Activated T-helper 2 cell treated with anti-CD3 and anti-CD28 coated beads, Interferon-gamma antibody, Interleukin-2, Interleukin-4, amounts not matched to agents 10 μg/mL and 5 μg/mL and 100 μg/mL, durations not matched to agents 14 hours and 24 hours and 36 hours (primary cell): ENCODE measurements at regions of chr15 and their contacts with region 1.

Region 1: DNA sequence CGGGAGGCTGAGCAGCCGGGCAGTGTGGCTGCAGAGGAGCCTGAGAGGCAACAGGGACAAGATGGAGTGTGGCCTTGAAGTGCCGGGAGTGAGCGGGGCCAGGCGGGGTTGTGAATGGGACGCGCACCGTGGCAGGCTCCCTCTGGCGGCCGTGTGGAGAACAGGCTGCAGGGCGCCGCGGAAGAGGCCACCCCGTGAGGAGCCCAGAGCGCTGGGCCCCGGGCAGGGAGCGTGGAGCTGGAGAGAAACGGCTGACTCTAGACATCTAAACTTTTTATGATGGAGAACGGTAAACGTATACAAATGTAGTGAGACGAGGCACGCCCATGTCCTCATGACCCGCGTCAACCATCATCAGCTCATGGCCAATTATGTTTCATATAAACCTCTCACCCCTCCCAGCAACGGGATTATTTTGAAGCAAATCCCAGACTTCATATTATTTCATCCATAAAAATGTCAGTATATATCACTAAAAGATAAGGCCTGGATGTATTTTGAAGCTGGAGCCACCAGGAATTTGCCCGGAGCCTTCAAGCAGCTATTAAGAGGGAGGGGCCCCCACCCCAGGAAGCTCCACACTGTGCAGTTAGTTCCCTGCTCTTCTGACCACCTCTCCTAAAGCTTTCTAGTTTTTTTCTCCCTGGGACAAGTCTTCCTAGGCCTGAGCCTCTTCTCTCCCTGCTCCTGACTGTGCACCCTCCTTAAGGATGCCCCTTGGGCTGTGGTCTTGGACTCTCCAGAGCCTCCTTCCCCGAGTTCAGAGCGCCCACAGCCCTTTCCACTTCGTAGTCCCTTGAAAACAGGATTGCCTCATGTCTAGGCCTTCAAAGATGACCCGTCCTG is 149.4 kb downstream of the SMAD6 start:
- DNase-seq: peak; percentile 68
- H3K4me3 Mint-ChIP-seq: no peak overlapping the region
- H3K27ac Mint-ChIP-seq: no peak overlapping the region
- H3K4me1 Mint-ChIP-seq: peaks cover 9% of the 10 kb centered on the region
- H3K27me3 Mint-ChIP-seq: peaks cover 6% of the 10 kb centered on the region

Region 2: DNA sequence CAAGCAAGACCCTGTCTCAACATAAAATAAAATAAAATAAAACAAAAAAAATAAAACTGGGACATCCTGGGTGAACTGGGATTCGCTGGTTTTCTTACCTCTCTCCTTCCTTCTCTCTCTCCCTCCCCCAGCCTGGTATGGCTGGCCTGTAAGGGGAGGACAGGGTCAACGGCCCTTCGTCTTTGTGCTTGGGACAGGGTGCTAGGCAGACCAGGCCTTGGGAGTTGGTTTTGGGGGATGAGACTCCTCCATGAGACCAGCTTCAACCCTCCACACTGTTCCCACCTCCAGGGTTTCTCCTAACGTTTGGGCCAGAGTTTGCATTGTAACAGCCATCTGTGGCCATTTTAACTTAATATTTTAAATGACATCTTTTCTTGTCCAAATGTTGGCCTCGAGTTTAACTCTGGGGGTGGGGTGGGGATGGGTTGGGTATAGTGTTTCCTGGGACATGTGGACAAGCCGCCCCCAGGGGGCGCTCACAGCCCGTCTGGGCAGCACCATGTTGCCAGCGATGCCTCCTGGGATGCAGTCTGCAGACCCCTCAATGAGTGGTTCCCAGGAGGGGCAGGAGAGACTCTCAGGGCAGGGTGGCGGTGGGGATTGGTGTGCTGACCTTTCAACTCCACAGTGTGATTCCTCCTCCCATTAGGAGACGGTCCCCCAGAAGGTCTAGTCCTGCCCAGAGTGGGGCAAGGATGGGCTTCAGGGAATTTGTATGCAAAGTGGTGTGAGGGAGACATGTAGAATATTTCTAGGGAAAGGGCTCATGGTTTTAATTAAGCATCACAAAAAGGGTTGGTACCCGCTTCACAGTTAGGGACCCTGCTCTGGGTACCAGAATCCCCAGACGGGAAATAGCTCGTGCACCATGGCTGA is 247.9 kb before region 1 on chr15:
- intact Hi-C with region 1: loop called (anchors 2 kb)
- DNase-seq: peak; percentile 45
- H3K4me3 Mint-ChIP-seq: no peak overlapping the region
- H3K27ac Mint-ChIP-seq: no peak overlapping the region
- H3K4me1 Mint-ChIP-seq: peaks cover under 1% of the 10 kb centered on the region
- H3K27me3 Mint-ChIP-seq: peaks cover 7% of the 10 kb centered on the region